ENCODE measurements at regions of chr1 and their contacts with region 1.

Region 1: DNA sequence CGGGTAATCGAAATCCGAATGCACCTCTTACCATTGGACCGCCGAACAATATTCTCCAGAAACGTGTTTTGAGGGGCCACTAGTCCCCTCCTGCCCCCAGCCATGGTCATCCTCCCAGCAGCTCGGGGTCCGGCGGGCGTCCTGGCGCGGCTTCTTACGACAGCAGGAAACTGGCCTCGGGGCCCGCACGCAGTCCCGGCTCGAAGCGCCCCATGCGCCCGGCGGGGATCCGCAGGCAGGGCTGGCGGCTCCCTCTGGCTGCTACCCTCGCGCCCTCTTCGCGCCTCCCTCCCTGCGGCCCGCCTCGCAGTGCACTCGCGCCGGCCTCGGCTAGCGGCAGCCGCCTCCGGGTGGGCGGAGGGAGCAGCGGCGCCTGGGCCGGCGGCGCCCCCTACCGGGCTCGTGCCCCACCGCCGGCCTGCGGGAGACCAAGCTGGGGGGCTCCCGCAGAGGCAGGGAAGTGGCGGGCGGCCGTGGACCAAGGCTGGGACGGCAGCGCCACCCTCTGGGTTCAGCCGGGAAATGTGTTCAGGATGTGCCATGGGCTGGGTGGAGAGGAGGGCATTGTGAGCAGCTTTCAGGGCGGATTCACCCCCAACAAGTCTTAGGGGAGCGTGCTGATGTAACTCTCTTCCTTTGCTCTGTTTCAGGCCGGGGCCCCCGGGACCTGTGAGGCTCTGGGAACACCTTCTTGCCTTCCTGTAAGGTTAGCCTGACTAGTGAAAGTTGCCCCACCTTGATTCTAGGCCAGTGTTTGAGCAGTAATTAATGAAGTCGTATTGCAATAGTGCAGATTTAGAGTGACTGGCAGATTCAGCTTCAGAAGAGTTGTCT is at the start of gene KCNH1:
- DNase-seq: peak; percentile 90
- H3K4me3 Mint-ChIP-seq: peak within 1 kb of the TSS; percentile 66
- H3K27ac Mint-ChIP-seq: no peak within 1 kb of the TSS
- H3K4me1 Mint-ChIP-seq: peaks cover 7% of the 10 kb centered on the region
- H3K27me3 Mint-ChIP-seq: peaks cover 50% of the 10 kb centered on the region
- total RNA-seq, gene KCNH1: not detected

Region 2: DNA sequence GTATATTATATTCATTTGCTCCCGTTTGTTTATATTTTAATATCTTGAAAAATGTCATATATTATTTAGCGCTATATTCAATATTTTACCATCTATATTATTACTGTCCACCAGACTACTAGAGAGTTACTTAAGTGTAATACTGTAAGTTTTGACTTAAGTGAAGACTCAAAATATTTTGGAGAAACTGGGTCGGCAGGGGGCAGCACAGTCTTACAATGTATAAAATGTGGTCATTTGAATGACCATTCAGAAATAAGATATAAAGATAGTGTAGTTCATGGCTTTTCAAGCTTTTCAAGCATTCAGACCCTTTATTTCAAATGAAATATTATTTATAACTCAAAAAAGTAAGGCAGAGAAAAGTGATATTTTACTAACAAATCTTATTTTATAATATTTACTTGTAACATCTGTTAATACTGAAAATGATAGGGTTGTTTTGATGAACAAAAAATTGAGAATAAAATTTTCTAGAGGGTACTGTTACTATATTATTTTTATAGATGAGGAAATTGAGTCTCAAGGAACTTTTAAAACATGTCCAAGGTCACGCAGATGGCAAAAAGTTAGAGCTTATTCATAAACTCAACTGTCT is 990.5 kb before region 1 on chr1:
- CTCF ChIA-PET with region 1: no interaction called
- intact Hi-C with region 1: loop called (anchors 2 kb)
- DNase-seq: peak; percentile 77
- H3K4me3 Mint-ChIP-seq: no peak overlapping the region
- H3K27ac Mint-ChIP-seq: no peak overlapping the region
- H3K4me1 Mint-ChIP-seq: no peaks in the 10 kb centered on the region
- H3K27me3 Mint-ChIP-seq: peaks cover 13% of the 10 kb centered on the region

Region 3: DNA sequence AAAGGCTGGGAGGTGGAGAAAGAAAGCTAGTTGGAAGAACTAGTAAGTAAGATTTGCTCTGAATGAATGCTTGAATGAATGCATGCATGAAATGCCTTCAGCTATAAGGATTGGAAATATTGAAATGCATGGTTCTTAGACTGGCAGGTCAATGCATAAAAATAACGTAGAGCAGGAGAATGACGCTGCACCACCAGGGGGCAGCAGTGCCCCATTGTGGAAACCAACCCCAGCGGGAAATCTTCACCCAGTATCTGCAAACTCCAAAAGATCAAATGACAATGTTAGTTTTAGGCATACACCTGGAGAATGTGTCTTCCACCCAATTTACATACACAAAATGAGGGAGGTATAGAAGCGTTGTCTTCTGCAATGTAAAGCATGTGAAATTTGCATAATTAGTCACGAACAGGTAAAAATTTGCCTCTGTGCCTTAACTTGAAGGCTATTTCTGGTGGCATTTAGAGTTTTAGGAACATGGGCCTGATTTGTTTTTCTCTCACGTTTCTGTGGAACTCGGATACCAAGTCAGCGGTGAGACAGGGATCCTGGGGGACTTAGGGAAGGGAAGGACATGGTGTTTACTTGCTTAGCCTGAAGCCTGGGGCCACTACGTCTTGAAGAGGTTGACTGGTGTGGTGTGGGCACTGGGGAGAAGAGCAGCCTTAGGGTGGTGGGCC is 726.7 kb before region 1 on chr1:
- CTCF ChIA-PET with region 1: interaction called, 21 read pairs
- intact Hi-C with region 1: loop called (anchors 1 kb)
- DNase-seq: peak; percentile 86
- H3K4me3 Mint-ChIP-seq: no peak overlapping the region
- H3K27ac Mint-ChIP-seq: no peak overlapping the region
- H3K4me1 Mint-ChIP-seq: peaks cover 5% of the 10 kb centered on the region
- H3K27me3 Mint-ChIP-seq: peaks cover 2% of the 10 kb centered on the region

Region 4: DNA sequence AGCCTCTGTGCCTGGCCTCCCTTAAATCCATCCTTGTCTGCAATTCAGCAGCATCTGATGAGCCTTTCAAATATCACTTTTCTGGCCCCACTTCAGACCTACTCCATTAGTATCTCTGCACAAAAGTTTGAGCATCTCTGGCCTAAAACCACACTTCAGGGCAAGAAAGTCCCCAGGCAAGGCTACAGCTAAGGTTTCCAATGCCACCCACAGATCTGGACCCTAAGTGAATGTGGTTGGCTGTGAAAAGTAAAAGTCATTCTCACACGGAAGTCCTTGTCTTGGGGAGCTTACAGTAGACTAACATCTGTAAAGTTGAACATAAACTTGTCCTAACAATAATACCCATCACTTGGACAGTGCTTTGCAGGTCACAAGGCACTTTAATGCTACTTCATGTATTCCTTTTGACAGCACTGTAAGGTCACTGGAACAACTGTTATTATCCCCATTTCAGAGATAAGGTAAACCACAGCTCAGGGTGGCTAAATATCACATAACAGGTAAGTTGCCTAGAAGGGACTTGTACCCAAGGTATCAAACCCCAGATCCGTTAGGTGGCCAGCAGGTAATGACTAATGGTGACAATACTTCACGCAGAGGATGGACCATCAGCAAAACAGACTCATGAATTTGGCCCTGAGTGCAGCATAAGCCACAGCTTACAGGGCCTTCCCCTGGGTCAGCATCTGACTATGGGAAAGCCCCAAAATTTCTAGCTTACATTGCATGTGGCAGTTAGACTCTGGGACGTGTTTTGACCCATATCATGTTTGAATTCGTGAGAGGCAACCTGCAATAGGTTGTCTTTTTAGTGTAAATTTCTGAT is 449.4 kb before region 1 on chr1:
- CTCF ChIA-PET with region 1: no interaction called
- intact Hi-C with region 1: loop called (anchors 5 kb)
- DNase-seq: peak; percentile 15
- H3K4me3 Mint-ChIP-seq: no peak overlapping the region
- H3K27ac Mint-ChIP-seq: no peak overlapping the region
- H3K4me1 Mint-ChIP-seq: peaks cover 3% of the 10 kb centered on the region
- H3K27me3 Mint-ChIP-seq: no peaks in the 10 kb centered on the region

Region 5: GRCh38 chr1:211192227-211192626 is 58.2 kb after region 1 on chr1:
- CTCF ChIA-PET with region 1: no interaction called
- intact Hi-C with region 1: no loop called
- DNase-seq: no peak
- H3K4me3 Mint-ChIP-seq: no peak overlapping the region
- H3K27ac Mint-ChIP-seq: no peak overlapping the region
- H3K4me1 Mint-ChIP-seq: peaks cover 5% of the 10 kb centered on the region
- H3K27me3 Mint-ChIP-seq: no peaks in the 10 kb centered on the region

Region 6: DNA sequence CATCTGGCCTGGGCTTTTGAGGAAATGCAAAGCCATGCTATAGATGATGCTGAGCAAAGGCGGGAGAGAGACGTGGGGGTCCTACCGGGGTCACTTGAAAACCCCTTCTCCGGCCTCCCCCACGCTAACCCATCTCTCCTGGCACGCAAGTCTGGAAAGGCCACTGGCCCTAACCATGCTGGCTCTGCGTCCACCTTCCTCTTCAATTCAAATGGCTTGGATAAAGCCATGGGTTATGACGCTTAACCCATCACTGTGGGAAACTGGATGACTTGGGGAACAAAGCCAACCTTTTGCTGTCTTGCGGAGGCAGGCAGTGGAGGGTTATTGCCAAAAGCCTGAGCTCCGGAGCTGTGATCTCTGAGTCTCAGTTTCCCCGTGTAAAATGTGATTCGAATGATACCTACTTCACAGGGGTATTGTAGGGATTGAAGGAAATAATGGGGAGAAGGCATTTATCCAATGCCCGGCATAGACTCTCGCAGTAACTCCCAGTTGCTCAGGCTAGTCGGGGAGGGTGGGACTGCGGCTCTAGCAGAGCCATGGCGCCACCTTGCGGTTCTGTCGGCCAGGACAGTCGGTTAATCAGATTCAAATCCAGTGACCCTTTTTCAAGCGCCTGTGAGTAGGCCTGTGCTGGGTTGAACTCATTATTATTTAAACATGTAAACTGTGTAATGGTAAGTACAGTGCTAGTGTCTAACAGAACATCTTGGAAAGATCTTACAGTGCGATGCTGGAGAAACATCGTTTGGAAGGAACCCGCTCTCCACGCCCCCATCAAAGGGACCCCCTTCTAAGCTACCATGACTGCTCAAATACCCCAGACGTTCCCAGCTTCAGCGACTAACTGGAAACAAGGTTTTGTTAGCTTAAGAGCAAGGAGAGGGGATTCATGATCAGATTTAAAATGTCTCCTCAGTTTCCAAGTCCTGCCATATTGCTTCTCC is 521.1 kb after region 1 on chr1:
- CTCF ChIA-PET with region 1: no interaction called
- intact Hi-C with region 1: loop called (anchors 1 kb)
- DNase-seq: peak; percentile 89
- H3K4me3 Mint-ChIP-seq: no peak overlapping the region
- H3K27ac Mint-ChIP-seq: no peak overlapping the region
- H3K4me1 Mint-ChIP-seq: no peaks in the 10 kb centered on the region
- H3K27me3 Mint-ChIP-seq: no peaks in the 10 kb centered on the region

Region 7: DNA sequence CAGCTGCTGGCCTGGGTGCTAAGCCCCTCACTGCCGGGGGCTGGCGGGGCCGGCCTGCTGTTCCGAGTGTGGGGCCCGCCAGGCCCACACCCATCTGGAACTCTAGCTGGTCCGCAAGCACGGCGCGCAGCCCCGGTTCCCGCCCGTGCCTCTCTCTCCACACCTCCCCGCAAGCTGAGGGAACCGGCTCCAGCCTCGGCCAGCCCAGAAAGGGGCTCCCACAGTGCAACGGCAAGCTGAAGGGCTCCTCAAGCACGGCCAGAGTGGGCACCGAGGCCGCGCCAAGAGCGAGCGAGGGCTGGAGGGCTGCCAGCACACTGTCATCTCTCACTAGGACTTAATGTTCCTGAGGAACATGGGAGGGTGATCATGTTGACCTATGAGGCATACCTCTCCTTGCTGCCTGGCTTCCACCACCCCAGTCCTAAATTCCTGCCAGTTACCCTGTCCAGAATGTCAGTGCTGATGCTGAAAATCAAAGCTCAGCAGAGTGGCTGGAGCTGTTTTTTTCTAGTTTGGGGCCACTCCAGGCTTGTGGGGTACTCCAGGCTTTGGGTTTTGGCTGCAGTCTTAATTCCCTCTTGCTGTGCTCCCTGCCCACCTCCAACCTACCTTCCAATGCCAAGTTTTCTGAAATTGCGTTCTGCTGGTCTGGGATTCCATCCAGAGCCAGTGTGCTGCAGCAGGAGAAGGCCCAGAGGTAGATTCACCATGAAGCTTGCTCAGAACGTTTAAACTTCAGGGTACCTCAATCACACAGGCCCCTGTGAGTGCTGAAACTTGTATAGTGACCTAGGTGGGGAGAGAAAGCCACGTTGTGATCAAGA is 740.7 kb after region 1 on chr1:
- CTCF ChIA-PET with region 1: no interaction called
- intact Hi-C with region 1: no loop called
- DNase-seq: no peak
- H3K4me3 Mint-ChIP-seq: no peak overlapping the region
- H3K27ac Mint-ChIP-seq: no peak overlapping the region
- H3K4me1 Mint-ChIP-seq: no peaks in the 10 kb centered on the region
- H3K27me3 Mint-ChIP-seq: no peaks in the 10 kb centered on the region

Measured in activated naive CD4-positive, alpha-beta T cell treated with anti-CD3 and anti-CD28 coated beads for 36 hours (primary cell).